ENCODE measurements at regions of chrX and their contacts with region 1.

Region 1: DNA sequence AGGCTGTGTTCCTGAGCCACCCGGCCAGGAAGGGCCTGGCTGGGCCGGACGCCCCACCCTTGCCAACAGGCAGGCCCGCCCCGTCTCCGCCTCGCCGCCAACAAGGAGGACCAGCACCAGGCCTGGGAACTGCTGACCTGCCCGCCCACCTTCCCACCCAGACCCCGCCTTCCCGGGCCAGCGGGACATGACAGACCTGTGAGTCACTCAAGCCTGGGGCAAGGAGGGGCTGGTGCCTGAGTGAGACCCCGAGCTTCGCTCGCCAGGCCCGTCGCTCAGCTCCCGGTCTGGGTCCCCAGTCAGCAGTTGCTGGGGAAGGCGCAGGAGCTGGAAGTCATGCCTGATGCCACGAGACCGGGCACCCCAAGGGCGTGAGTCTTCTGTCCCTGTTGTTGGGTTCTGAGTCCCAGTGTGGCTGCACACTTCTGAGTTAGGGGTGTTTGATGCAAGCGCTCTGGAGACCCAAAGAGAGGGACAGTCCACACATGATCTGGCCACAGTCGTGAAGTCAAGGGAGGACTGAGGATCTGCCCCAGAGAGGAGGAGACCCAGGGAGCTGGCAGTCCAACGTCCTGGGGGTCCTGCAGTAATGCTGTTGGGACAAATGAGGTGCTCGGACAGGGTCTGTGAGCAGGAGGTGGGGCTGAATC is at the start of gene DNASE1L1:
- DNase-seq: peak; percentile 92
- H3K4me3 ChIP-seq: peak within 1 kb of the TSS; percentile 45 to 72 (median 72)
- H3K27ac ChIP-seq: peak within 1 kb of the TSS; percentile 69
- H3K4me1 ChIP-seq: peaks cover 22% of the 10 kb centered on the region
- H3K27me3 ChIP-seq: no peaks in the 10 kb centered on the region
- CTCF ChIP-seq: no peak
- POLR2A ChIP-seq: peak; percentile 49
- total RNA-seq, gene DNASE1L1: 47.5 and 61.5 TPM in 2 replicates

Region 2: DNA sequence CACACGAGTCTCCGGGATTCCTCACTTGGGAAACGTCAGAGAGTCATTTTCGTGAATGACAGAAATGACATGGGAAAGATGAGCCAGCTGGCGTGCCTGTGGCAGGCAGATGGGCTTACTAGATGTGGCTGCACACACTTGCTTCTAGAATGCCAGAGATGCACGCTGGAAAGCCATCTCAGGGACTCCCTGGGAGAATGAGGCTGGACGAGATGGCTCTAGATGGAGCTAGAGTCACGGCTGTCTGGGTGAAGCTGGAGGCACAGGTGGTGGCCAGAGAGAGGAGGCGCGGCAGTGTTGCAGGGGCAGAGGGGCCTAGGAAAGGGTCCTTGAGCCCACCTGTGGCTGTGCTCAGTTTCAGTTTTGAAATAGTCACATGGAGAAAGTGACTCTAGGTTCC is 87.8 kb before region 1 on chrX:
- CTCF ChIA-PET with region 1: no interaction called
- POLR2A ChIA-PET with region 1: no interaction called
- dilution Hi-C with region 1: no loop called
- intact Hi-C with region 1: no loop called
- DNase-seq: no peak
- H3K4me3 ChIP-seq: no peak overlapping the region
- H3K27ac ChIP-seq: no peak overlapping the region
- H3K4me1 ChIP-seq: peaks cover 15% of the 10 kb centered on the region
- H3K27me3 ChIP-seq: no peaks in the 10 kb centered on the region
- CTCF ChIP-seq: no peak
- POLR2A ChIP-seq: no peak

Region 3: GRCh38 chrX:154370882-154371770 is 38.2 kb before region 1 on chrX:
- CTCF ChIA-PET with region 1: interaction called, 3 read pairs
- POLR2A ChIA-PET with region 1: interaction called, 5 read pairs
- dilution Hi-C with region 1: no loop called
- intact Hi-C with region 1: loop called (anchors 5 kb)
- DNase-seq: peak; percentile 91
- H3K4me3 ChIP-seq: peak overlapping the region; percentile 82 to 99 (median 91)
- H3K27ac ChIP-seq: peak overlapping the region; percentile 91
- H3K4me1 ChIP-seq: peaks cover 30% of the 10 kb centered on the region
- H3K27me3 ChIP-seq: no peaks in the 10 kb centered on the region
- CTCF ChIP-seq: no peak
- POLR2A ChIP-seq: peak; percentile 98

Region 4: DNA sequence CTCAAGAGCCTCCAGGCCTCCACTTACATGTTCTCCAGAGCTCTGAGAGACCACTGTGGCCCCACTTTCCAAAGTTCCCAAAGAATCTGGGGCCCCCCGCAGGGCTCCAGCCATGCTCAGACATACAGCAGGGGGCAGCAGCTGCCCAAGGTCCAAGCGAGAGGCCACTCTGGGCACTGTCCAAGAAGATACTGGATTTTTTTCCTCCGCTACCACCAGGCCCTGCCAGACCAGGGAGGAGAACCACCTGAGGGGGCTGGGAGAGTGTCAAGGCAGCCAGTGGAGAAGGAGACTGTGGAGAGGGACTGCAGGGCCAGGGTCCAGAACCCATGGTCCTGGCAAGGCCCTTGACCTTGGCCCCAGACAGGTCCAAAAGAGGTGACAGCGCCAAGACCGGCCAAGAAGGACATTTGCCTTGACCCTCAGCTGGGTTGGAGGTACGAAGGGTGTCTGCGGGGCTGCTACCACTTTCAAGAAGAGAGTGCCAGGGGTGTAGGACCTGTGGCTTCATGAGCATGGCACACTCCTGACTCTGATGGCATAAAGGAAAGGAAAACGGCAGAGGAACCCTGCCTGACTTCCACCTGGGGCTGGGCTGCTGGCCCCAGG is 25.0 kb before region 1 on chrX:
- CTCF ChIA-PET with region 1: no interaction called
- POLR2A ChIA-PET with region 1: no interaction called
- dilution Hi-C with region 1: no loop called
- intact Hi-C with region 1: no loop called
- DNase-seq: no peak
- H3K4me3 ChIP-seq: no peak overlapping the region
- H3K27ac ChIP-seq: no peak overlapping the region
- H3K4me1 ChIP-seq: no peaks in the 10 kb centered on the region
- H3K27me3 ChIP-seq: no peaks in the 10 kb centered on the region
- CTCF ChIP-seq: peak; percentile 30 to 44
- POLR2A ChIP-seq: no peak

Region 5: GRCh38 chrX:154428176-154429010 is 19.0 kb after region 1 on chrX and contains the start of gene ATP6AP1:
- CTCF ChIA-PET with region 1: interaction called, 4 read pairs
- POLR2A ChIA-PET with region 1: no interaction called
- dilution Hi-C with region 1: no loop called
- intact Hi-C with region 1: loop called (anchors 1 kb)
- DNase-seq: peak; percentile 93
- H3K4me3 ChIP-seq: peak within 1 kb of the TSS; percentile 44 to 78 (median 73)
- H3K27ac ChIP-seq: peak within 1 kb of the TSS; percentile 43
- H3K4me1 ChIP-seq: peaks cover 28% of the 10 kb centered on the region
- H3K27me3 ChIP-seq: no peaks in the 10 kb centered on the region
- CTCF ChIP-seq: no peak
- POLR2A ChIP-seq: peak; percentile 51
- total RNA-seq, gene ATP6AP1: 136 and 145 TPM in 2 replicates

Region 6: GRCh38 chrX:154443992-154444754 is 34.8 kb after region 1 on chrX and contains the start of gene FAM50A:
- CTCF ChIA-PET with region 1: no interaction called
- POLR2A ChIA-PET with region 1: no interaction called
- dilution Hi-C with region 1: no loop called
- intact Hi-C with region 1: loop called (anchors 5 kb)
- DNase-seq: peak; percentile 40
- H3K4me3 ChIP-seq: peak within 1 kb of the TSS; percentile 35 to 69 (median 50)
- H3K27ac ChIP-seq: peak within 1 kb of the TSS; percentile 63
- H3K4me1 ChIP-seq: peaks cover 8% of the 10 kb centered on the region
- H3K27me3 ChIP-seq: no peaks in the 10 kb centered on the region
- CTCF ChIP-seq: no peak
- POLR2A ChIP-seq: no peak
- total RNA-seq, gene FAM50A: 111 and 123 TPM in 2 replicates

Region 7: GRCh38 chrX:154458114-154458953 is 49.0 kb after region 1 on chrX and contains the start of gene PLXNA3:
- CTCF ChIA-PET with region 1: no interaction called
- POLR2A ChIA-PET with region 1: no interaction called
- dilution Hi-C with region 1: no loop called
- intact Hi-C with region 1: no loop called
- DNase-seq: no peak
- H3K4me3 ChIP-seq: peak within 1 kb of the TSS; percentile 73 to 81 (median 76)
- H3K27ac ChIP-seq: no peak within 1 kb of the TSS
- H3K4me1 ChIP-seq: peaks cover 7% of the 10 kb centered on the region
- H3K27me3 ChIP-seq: no peaks in the 10 kb centered on the region
- CTCF ChIP-seq: no peak
- POLR2A ChIP-seq: peak; percentile 72
- total RNA-seq, gene PLXNA3: 58.3 and 58.6 TPM in 2 replicates

Region 8: GRCh38 chrX:154526901-154527675 is 117.7 kb after region 1 on chrX:
- CTCF ChIA-PET with region 1: interaction called, 6 read pairs
- POLR2A ChIA-PET with region 1: no interaction called
- dilution Hi-C with region 1: no loop called
- intact Hi-C with region 1: loop called (anchors 5 kb)
- DNase-seq: peak; percentile 71
- H3K4me3 ChIP-seq: peak overlapping the region in 1 of 3 experiments; percentile 22
- H3K27ac ChIP-seq: peak overlapping the region; percentile 22
- H3K4me1 ChIP-seq: peaks cover 4% of the 10 kb centered on the region
- H3K27me3 ChIP-seq: no peaks in the 10 kb centered on the region
- CTCF ChIP-seq: peak; percentile 37 to 43
- POLR2A ChIP-seq: no peak

Region 9: GRCh38 chrX:154649503-154650470 is 240.4 kb after region 1 on chrX:
- CTCF ChIA-PET with region 1: no interaction called
- POLR2A ChIA-PET with region 1: no interaction called
- dilution Hi-C with region 1: no loop called
- intact Hi-C with region 1: no loop called
- DNase-seq: no peak
- H3K4me3 ChIP-seq: no peak overlapping the region
- H3K27ac ChIP-seq: no peak overlapping the region
- H3K4me1 ChIP-seq: peaks cover 5% of the 10 kb centered on the region
- H3K27me3 ChIP-seq: no peaks in the 10 kb centered on the region
- CTCF ChIP-seq: no peak
- POLR2A ChIP-seq: no peak